H1 (cell line): ENCODE measurements at regions of chr4 and their contacts with region 1.

Region 1: DNA sequence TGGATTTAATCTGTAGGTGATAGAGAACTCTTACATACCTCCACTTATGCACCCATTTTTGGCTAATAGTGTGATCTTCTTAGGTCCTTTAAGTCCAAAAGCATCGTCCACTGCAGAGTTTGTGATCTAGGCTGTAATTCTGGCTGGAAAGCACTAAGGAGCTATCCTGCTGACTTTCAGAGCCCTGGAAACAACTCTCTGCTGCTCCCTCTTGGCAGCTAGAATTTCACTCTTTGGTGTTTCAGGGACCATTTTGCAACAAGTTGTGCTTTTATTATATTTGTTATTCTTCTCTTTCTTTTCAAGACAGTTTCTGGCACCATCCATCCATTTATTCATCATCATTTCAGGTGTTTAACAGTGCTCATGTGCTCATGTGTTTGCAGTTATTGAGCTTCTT is 130.0 kb downstream of the RBM46 start:
- DNase-seq: no peak
- H3K4me3 ChIP-seq: no peak overlapping the region
- H3K27ac ChIP-seq: no peak overlapping the region
- H3K4me1 ChIP-seq: peaks cover 1 to 11% (median 4%) of the 10 kb centered on the region in 4 experiments; a peak in 4 of 7 replicates
- H3K27me3 ChIP-seq: no peaks in the 10 kb centered on the region
- CTCF ChIP-seq: peak in 2 of 3 experiments; percentile 52 to 56; a peak in 3 of 4 replicates
- EP300 ChIP-seq: no peak
- POLR2A ChIP-seq: no peak
- RAD21 ChIP-seq: peak; percentile 55 to 67

Region 2: DNA sequence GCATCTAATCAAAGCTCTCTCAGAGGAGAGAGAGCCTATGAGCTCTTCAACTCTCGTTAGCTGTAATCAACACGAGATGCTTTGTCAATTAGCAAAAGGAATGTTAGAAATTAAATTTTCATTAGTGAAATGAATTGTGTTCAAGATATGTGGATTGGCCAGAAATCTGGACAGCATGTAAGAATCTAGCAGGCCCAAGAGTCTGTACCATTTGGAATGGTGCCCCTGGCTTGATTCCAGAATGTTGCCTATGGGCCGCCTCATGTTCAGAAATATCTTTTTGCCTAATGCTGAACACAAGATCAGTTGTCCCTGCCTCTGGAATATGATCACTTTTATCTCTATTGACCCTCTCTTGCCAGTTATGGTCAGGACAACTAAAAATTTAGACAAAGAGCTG is 41.8 kb before region 1 on chr4:
- CTCF ChIA-PET with region 1: interaction called, 12 read pairs
- POLR2A ChIA-PET with region 1: no interaction called
- DNase-seq: no peak
- H3K4me3 ChIP-seq: no peak overlapping the region
- H3K27ac ChIP-seq: no peak overlapping the region
- H3K4me1 ChIP-seq: peaks cover 0 to 7% (median 4%) of the 10 kb centered on the region in 4 experiments; a peak in 5 of 7 replicates
- H3K27me3 ChIP-seq: no peaks in the 10 kb centered on the region
- CTCF ChIP-seq: no peak
- EP300 ChIP-seq: no peak
- POLR2A ChIP-seq: no peak
- RAD21 ChIP-seq: no peak

Region 3: DNA sequence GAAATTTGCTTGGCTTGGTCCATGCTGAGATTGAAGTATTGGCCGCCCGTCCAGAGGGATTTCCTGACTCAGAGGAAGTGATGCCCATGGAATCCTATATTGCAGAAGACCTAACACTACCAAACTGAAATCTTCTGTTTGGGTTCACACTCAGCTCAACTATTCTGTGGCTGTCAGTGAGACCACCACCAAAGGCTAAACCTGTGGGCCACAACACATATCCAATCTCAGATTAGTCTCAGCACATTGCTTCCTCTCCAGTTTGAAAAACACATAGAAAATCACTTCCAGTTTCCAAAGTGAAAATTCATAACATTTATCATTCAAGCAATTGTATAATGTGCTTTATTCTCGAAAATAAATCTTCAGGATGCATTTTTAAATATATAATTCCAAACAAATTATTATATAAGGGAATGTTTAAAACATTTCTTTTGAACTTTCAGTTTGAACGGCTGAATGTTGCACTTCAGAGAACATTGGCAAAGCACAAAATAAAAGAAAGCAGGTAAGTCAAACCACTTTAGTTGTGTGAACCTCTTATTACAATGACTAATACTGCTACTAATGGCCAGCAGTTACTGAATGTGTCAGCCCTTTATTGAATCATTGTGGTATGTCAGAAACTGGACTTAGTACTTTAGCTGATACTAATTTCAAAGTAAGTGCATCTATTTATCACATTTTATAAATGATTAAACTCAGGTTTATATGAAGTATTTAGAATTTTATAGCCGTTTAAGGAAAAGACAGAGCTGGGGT is 792.6 kb after region 1 on chr4:
- CTCF ChIA-PET with region 1: no interaction called
- POLR2A ChIA-PET with region 1: no interaction called
- DNase-seq: no peak
- H3K4me3 ChIP-seq: no peak overlapping the region
- H3K27ac ChIP-seq: no peak overlapping the region
- H3K4me1 ChIP-seq: no peaks in the 10 kb centered on the region
- H3K27me3 ChIP-seq: no peaks in the 10 kb centered on the region
- CTCF ChIP-seq: no peak
- EP300 ChIP-seq: no peak
- POLR2A ChIP-seq: no peak
- RAD21 ChIP-seq: no peak